Caco-2 (cell line): ENCODE measurements at regions of chr3 and their contacts with region 1.

Region 1: DNA sequence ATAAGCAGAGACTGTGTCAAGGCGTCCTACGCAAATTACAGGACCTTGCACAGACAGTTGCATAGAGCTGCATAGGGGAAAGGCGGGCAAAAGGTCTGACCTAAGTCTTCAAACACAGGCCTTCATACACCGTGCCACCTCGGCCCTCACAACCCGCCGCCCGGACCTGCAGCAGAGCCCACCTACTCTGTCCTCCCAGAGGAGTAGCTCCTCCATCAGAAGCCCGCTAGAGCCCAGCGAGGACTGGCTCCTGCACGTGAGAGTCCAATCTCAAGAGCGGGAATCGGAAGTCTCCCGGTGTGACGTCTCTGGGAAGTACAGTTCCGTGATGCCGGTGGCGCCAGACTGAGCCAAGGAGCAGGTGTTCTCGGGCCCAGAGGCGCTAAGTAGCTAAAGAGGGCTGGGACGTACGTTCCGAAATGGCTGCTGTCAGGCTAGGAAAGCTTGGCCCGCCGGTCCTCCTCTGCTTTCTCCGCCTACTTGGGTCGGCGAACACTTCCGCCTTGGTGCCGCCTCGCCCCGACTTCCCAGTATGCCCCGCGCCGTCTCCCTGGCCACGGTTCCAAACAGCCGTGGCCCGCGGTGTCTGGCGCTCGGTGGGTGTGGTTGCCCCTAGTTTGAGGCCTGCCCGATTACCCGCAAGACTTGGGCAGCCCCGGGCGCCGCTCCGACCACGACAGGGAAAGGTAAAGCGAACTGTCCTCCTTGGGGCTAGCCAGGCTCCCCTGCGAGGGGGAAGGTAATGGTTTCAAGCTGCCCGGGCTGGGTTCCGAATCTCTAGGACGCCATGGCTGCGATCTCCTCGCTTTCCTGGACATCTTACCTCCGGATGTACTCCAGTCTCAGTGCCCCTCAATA is at the starts of genes ASTE1 and NEK11:
- DNase-seq: peak; percentile 88 to 92
- H3K4me3 ChIP-seq: peak within 1 kb of the TSS; percentile 60
- H3K4me3 Mint-ChIP-seq: peak within 1 kb of the TSS; percentile 82
- H3K27ac Mint-ChIP-seq: peak within 1 kb of the TSS; percentile 95
- H3K4me1 ChIP-seq: peaks cover 19% of the 10 kb centered on the region; the same call in 1 of the 2 replicates
- H3K4me1 Mint-ChIP-seq: peaks cover 23% of the 10 kb centered on the region
- H3K27me3 ChIP-seq: no peaks in the 10 kb centered on the region
- H3K27me3 Mint-ChIP-seq: no peaks in the 10 kb centered on the region
- CTCF ChIP-seq: no peak
- total RNA-seq, gene ASTE1: 8.7 and 11.0 TPM in 2 replicates
- total RNA-seq, gene NEK11: 3.9 and 4.4 TPM in 2 replicates

Region 2: GRCh38 chr3:131502530-131503245 is 476.1 kb after region 1 on chr3 and contains the start of gene MRPL3:
- CTCF ChIA-PET with region 1: no interaction called
- POLR2A ChIA-PET with region 1: no interaction called
- intact Hi-C with region 1: loop called (anchors 5 kb)
- DNase-seq: peak; percentile 86 to 88
- H3K4me3 ChIP-seq: peak within 1 kb of the TSS; percentile 96
- H3K4me3 Mint-ChIP-seq: peak within 1 kb of the TSS; percentile 100
- H3K27ac Mint-ChIP-seq: peak within 1 kb of the TSS; percentile 100
- H3K4me1 ChIP-seq: 0 out of 2 replicates have a peak, but pooled peaks cover 3% of the 10 kb centered on the region
- H3K4me1 Mint-ChIP-seq: no peaks in the 10 kb centered on the region
- H3K27me3 ChIP-seq: no peaks in the 10 kb centered on the region
- H3K27me3 Mint-ChIP-seq: peaks cover 7% of the 10 kb centered on the region
- CTCF ChIP-seq: no peak
- total RNA-seq, gene MRPL3: 123 and 126 TPM in 2 replicates